ENCODE measurements at regions of chr5 and their contacts with region 1.

Region 1: DNA sequence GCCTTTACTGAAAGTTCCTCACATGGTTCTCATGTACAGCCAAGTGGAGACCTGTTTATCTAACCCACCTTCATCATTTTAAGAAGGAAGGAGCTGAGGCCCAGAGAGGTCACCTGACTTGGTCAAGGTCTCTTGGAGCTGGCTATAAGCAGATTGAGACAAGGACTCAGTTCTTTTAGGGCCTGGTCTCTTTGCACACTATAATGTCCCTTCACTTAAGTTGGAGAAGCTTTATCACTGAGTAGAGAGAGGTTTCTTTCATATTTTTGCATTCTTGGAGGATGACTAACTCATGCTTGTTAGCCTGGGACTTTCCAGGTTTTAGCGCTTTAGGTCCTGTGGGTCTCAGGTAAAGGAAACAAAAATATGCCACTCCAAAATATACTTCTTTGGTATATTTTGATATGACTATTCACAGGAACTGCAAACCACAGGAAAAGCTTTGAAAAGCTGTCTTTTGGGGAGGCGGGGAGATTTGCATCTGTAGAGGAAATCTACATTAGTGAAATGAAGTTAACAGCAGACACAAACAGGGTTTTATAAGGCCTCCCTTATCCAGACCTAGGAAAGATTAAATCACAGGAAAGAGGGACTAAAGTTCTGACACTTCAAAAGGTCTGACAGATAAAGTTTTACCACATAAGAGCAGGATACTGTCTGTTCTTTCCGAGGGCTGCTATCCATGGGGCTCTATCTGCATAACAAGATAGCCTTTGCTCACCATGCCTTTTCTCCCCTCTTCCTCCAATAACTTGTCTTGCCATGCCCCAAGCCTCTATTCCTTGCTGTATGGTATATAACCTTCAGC is 95.8 kb upstream of the ANKRD55 start:
- DNase-seq: peak; percentile 68
- ATAC-seq: peak; percentile 69
- H3K4me3 Mint-ChIP-seq: peak overlapping the region; percentile 34
- H3K27ac Mint-ChIP-seq: peak overlapping the region; percentile 93
- H3K4me1 Mint-ChIP-seq: peaks cover 66% of the 10 kb centered on the region
- H3K27me3 Mint-ChIP-seq: no peaks in the 10 kb centered on the region

Region 2: DNA sequence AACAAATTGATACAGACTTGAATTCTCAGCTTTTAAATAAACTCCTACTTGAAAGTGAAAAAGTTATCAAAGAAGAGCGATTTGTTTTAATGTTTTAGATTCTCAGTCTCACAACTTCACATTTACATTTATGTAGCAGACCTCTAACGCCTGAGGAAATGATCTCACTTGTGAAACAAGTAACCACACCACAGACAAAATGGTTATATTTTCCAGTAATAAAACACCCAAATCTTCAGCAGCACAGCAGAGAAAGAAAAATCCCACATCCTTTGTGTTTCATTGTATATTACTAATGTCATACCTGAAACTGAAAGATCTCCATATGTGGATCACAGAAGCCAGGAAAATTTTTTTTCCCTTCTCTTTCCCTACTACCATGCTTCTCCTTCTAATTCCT is 1256.3 kb before region 1 on chr5:
- CTCF ChIA-PET with region 1: no interaction called
- POLR2A ChIA-PET with region 1: no interaction called
- intact Hi-C with region 1: loop called in 1 of 2 experiments (anchors 10 kb)
- DNase-seq: no peak
- ATAC-seq: peak; percentile 83
- H3K4me3 Mint-ChIP-seq: peak overlapping the region; percentile 23
- H3K27ac Mint-ChIP-seq: peak overlapping the region; percentile 52
- H3K4me1 Mint-ChIP-seq: peaks cover 33% of the 10 kb centered on the region
- H3K27me3 Mint-ChIP-seq: peaks cover 2% of the 10 kb centered on the region

Region 3: GRCh38 chr5:56164376-56164775 is 164.6 kb before region 1 on chr5:
- CTCF ChIA-PET with region 1: no interaction called
- POLR2A ChIA-PET with region 1: no interaction called
- intact Hi-C with region 1: loop called in 1 of 2 experiments (anchors 2 kb)
- DNase-seq: no peak
- ATAC-seq: no peak
- H3K4me3 Mint-ChIP-seq: no peak overlapping the region
- H3K27ac Mint-ChIP-seq: no peak overlapping the region
- H3K4me1 Mint-ChIP-seq: peaks cover 59% of the 10 kb centered on the region
- H3K27me3 Mint-ChIP-seq: no peaks in the 10 kb centered on the region

Region 4: GRCh38 chr5:56481428-56482357 is 152.7 kb after region 1 on chr5:
- CTCF ChIA-PET with region 1: interaction called, 3 read pairs
- POLR2A ChIA-PET with region 1: interaction called, 5 read pairs
- intact Hi-C with region 1: loop called (anchors 2 kb)
- DNase-seq: peak; percentile 41
- ATAC-seq: peak; percentile 9
- H3K4me3 Mint-ChIP-seq: peak overlapping the region; percentile 74
- H3K27ac Mint-ChIP-seq: peak overlapping the region; percentile 84
- H3K4me1 Mint-ChIP-seq: peaks cover 41% of the 10 kb centered on the region
- H3K27me3 Mint-ChIP-seq: no peaks in the 10 kb centered on the region

Region 5: DNA sequence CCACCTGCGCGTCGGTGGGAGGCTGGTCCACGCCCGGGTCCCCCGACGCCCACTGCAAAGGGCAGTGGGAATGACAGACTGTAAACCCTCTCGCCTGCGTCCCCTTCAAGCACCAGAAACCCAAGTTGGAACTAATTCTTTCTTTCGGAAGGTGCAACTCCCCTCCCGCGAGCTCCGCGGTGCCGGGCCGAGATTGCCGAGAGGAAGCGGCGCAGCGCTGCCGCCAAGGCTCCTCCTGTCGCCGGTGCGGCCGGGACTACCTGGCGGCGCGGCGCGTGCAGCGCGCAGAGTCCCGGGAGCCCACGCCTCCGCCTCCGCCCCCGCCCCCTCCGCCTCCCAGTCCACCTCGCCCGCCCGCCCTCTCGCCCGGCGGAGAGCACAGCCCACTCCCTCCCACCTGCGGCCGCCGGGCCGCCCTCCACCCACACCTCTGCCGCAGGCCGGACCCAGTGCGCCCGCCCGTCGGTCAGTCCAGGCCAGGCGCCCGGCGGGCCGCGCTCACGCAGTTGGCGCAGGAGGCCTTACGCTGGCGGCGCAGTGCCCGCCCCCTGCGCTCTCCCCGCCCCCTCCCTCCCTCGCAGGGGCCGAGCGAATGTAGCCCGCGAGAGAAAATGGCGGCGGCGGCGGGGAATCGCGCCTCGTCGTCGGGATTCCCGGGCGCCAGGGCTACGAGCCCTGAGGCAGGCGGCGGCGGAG is 486.2 kb after region 1 on chr5 and contains the start of gene MAP3K1:
- CTCF ChIA-PET with region 1: interaction called, 3 read pairs
- POLR2A ChIA-PET with region 1: no interaction called
- intact Hi-C with region 1: loop called (anchors 1 to 2 kb)
- DNase-seq: peak; percentile 86
- ATAC-seq: peak; percentile 57
- H3K4me3 Mint-ChIP-seq: peak within 1 kb of the TSS; percentile 76
- H3K27ac Mint-ChIP-seq: peak within 1 kb of the TSS; percentile 87
- H3K4me1 Mint-ChIP-seq: peaks cover 33% of the 10 kb centered on the region
- H3K27me3 Mint-ChIP-seq: no peaks in the 10 kb centered on the region
- total RNA-seq, gene MAP3K1: 22.3 to 22.9 TPM

Region 6: DNA sequence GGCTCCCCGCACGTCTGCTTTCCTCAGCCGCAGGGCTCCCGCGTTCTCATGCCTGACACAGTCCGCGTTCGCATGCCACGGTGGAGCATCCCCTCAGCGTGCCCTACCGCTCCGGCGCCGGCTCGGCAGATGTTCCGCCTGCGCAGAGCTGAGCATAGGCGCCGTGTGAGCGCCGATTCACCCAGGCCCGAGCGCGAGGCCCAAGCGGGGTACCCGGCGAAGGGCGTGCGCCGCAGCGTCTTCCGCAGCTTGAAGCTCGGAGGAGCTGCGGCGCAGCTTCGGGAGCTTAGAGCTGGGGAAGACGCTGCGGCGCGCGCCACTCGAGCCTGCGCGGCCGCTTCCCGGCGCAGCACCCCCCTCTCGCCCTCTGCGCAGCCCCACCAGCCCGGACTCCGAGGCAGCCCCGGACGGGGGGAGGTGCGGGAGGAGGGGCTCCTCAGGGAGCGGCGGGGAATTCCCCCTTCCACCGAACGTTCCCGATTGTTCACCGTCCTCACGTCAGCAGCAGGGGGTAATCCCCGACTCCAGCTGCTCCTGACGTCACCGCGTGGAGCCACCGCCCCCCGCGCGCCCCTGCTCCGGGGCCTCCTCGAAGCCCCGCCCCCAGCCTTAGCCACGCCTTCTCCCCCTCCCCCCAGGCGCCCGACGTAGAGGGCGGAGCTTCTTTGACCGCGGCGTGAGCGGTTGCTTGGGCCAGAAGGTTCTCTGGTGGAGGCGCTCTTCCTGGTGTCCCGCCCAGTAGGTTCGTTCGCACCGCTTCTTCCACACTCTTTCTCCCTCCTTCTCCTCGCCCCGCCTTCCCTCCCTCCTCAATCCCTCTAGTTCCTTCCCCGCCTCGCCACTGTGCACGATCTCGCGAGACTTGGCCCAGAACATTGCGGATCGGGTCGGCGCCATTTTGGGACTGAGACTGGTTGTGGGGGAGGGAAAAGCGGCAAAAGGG is 844.5 kb after region 1 on chr5 and contains the start of gene GPBP1:
- CTCF ChIA-PET with region 1: no interaction called
- POLR2A ChIA-PET with region 1: no interaction called
- intact Hi-C with region 1: loop called (anchors 1 to 5 kb)
- DNase-seq: peak; percentile 99
- ATAC-seq: peak; percentile 78
- H3K4me3 Mint-ChIP-seq: peak within 1 kb of the TSS; percentile 83
- H3K27ac Mint-ChIP-seq: peak within 1 kb of the TSS; percentile 93
- H3K4me1 Mint-ChIP-seq: peaks cover 21% of the 10 kb centered on the region
- H3K27me3 Mint-ChIP-seq: no peaks in the 10 kb centered on the region
- total RNA-seq, gene GPBP1: 91.8 to 116 TPM

Measured in activated CD4-positive, alpha-beta T cell treated with anti-CD3 and anti-CD28 coated beads for 36 hours (primary cell).